ENCODE measurements at regions of chr1 and their contacts with region 1.

Region 1: DNA sequence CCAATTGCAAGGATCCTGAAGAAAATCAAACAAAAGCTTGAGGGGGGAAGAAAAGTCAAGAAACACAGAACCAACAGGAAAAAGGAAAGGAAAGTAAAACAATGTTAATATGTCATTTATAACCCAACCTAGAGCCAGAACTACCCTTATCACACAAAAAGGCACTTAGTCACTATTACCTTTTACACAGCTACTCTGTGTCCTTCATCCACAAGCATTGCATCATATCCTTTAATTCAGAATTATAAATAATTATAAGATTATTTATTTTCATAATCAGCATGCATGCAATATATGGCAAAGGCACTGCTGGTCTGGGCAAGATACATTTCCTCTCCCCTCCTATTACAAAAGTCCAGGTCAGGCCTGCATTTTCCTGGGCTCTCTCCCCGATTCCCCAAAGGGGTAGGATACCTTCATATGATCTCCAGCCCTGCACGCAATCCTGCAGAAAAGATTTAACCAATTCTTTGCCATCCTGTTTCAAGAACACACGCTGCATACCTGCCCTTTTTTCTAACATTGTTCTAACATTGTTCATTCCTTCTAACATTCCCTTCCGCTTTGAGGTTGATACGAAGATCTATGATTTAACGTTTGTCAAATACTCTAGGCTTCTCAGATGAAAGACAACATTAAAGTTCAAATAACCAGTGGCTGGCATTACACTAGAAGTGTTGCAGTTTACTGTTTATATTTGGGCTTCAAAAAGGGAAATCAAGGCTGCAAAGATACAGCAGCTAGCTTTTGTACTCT is 4.3 kb downstream of the PTPN14 start:
- DNase-seq: no peak
- H3K4me3 Mint-ChIP-seq: no peak overlapping the region
- H3K27ac Mint-ChIP-seq: no peak overlapping the region
- H3K4me1 Mint-ChIP-seq: peaks cover 6% of the 10 kb centered on the region
- H3K27me3 Mint-ChIP-seq: peaks cover 47% of the 10 kb centered on the region

Region 2: DNA sequence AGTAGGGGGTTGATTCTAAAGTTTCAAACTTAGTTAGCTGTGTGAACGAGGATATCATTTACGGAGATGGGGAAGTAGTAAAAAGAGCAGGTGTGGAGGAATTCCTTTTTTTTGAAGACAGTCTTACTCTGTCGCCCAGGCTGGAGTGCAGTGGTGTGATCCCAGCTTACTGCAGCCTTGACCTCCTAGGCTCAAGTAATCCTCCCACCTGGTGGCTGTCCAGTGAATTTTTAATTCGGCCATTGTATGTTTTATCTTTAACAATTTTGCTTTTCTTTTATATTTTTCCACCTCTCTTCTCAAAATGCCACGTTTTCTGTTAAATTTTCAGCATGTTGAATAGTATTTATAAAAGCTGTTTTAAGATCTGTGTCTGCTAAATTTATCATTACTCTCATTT is 43.6 kb after region 1 on chr1:
- CTCF ChIA-PET with region 1: no interaction called
- POLR2A ChIA-PET with region 1: interaction called, 10 read pairs
- DNase-seq: no peak
- H3K4me3 Mint-ChIP-seq: no peak overlapping the region
- H3K27ac Mint-ChIP-seq: no peak overlapping the region
- H3K4me1 Mint-ChIP-seq: no peaks in the 10 kb centered on the region
- H3K27me3 Mint-ChIP-seq: peaks cover 10% of the 10 kb centered on the region

Measured in activated CD4-positive, alpha-beta T cell treated with anti-CD3 and anti-CD28 coated beads, Interleukin-2, amount 10 ng/mL, durations not matched to agents 7 days and 5 days (primary cell).